IMR-90 (cell line): ENCODE measurements at regions of chr14 and their contacts with region 1.

Region 1: DNA sequence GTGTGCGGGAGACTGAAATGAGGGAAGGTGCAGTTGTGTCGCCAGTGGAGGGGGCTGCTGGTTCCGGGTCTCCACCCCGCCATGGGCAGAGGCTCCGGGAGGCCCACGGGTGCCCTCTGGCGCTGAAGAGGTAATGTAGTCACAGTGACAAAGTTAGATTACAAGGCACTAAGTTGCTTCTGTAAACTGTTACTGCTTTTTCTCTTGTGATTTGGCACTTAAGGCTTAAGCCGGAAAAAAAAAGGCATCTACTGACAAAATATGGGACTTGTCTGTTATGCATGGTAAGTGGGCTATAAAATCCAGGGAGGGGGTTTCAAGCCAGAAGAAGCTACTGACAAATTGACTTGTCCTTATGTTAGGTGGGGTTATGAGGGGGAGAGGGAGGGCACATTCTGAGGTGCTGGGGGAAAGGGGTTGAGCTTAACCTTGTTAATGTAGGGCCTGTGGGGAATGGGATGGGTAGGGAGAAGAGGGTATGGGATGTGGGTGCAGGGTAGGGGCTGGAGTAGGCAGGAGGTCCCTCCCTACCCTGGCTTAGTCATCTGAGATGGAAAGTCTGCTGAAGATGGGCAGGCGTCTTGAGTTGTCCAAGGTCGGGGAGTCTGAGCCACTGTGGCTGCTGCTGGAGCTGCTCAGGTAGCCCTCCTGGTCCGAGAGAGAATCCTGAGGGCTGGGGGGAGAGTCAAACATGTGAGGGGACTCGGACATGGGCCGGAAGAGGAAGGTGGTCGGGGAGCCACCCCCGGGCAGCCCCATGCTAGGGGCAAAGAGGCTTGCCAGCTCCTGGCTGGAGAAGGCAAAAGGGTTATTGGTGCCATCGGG is 3.7 kb downstream of the ZFP36L1 start:
- DNase-seq: peak; percentile 74
- ATAC-seq: 0 out of 2 replicates have a peak, but pooled peaks have one; percentile 6
- H3K4me3 ChIP-seq: peak overlapping the region; percentile 97
- H3K27ac ChIP-seq: peak overlapping the region; percentile 98
- H3K4me1 ChIP-seq: peaks cover 2% of the 10 kb centered on the region; the same call in 1 of the 2 replicates
- H3K27me3 ChIP-seq: no peaks in the 10 kb centered on the region
- CTCF ChIP-seq: peak; percentile 89
- POLR2A ChIP-seq: no peak
- RAD21 ChIP-seq: peak; percentile 94

Region 2: GRCh38 chr14:68248481-68249255 is 540.5 kb before region 1 on chr14:
- CTCF ChIA-PET with region 1: interaction called, 5 read pairs
- POLR2A ChIA-PET with region 1: interaction called, 10 read pairs
- dilution Hi-C with region 1: no loop called
- in situ Hi-C with region 1: no loop called
- intact Hi-C with region 1: loop called (anchors 1 kb)
- DNase-seq: peak; percentile 78
- ATAC-seq: peak; percentile 59
- H3K4me3 ChIP-seq: no peak overlapping the region
- H3K27ac ChIP-seq: peak overlapping the region; percentile 28; the same call in 1 of the 2 replicates
- H3K4me1 ChIP-seq: peaks cover 25% of the 10 kb centered on the region
- H3K27me3 ChIP-seq: no peaks in the 10 kb centered on the region
- CTCF ChIP-seq: peak; percentile 66
- POLR2A ChIP-seq: no peak
- RAD21 ChIP-seq: peak; percentile 89

Region 3: DNA sequence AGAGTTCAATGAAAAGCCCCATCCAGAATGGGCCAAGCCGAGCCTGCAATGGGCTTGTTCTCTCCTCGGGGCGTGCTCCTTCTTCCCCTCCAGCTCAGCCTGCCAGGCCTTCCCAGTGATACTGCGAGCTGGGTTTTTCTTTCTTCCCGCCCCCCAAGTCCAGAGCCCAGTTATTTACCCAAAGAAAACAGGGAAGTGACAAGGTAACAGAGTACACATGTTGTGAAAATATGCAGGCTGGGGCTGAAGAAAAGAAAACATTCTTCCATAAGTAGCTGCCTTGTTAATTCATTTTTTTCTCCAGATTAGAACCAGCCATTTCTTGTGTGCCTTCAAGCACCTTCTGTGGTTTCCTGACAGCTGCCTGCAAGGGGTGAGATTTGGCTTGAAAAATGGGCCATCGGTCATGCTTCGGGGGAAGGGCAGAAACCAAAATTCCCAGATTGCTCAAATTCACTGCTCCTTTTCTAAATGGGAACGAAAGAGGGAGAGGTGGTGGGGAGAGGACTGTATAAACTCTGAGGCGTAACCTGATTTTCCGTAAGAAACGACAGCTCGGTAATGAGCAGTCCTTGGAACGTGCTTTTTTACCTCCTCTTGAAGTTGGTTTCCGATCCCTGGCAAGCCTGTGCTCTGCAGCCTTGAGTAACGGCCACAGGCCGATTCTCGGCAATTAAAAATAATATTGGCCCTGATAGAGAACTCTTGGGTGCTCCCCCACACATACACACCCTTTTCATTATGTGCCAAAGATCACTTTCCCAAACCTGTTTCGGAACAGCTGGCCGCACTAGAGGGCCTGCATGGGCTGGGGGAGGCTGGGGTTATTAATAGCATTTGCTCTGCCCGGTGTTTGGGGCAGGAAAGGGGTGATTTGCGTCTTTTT is 225.7 kb before region 1 on chr14:
- CTCF ChIA-PET with region 1: no interaction called
- POLR2A ChIA-PET with region 1: interaction called, 12 read pairs
- dilution Hi-C with region 1: no loop called
- in situ Hi-C with region 1: no loop called
- intact Hi-C with region 1: no loop called
- DNase-seq: peak; percentile 35
- ATAC-seq: peak; percentile 59
- H3K4me3 ChIP-seq: no peak overlapping the region
- H3K27ac ChIP-seq: peak overlapping the region; percentile 34; the same call in 1 of the 2 replicates
- H3K4me1 ChIP-seq: peaks cover 11% of the 10 kb centered on the region
- H3K27me3 ChIP-seq: no peaks in the 10 kb centered on the region
- CTCF ChIP-seq: no peak
- POLR2A ChIP-seq: no peak
- RAD21 ChIP-seq: no peak

Region 4: DNA sequence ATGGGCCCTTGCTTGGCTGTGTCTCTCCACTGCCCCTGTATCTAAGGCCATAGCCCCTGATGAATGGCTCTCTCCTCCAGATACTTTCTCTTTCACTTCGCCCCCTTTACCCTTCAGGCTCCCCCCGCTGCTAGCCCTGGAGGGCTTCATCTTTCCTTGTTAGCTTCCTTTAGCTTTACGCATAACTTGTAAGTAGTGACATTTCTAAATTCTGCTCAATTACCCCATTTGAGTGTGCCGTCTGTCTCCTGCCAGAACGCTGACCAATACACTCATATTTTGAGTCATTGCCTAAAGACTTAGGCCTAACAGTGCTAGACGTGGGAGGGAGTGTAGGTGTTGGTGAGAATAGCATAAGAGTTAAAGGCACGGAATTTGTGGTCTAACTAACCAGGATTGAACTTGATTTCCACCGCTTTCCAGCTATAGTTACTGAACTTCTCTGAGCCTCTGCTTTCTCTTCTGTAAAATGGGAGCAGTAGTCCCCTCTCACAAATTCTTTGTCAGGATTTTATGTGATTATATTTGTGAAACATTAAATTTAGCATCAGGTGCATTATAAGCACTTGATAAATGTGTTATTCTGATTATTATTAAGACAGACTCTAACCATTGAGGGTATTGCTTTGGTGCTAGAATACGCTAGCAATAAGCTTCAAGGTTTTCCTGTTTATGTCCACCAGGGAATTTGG is 125.7 kb before region 1 on chr14:
- CTCF ChIA-PET with region 1: interaction called, 5 read pairs
- POLR2A ChIA-PET with region 1: interaction called, 3 read pairs
- dilution Hi-C with region 1: no loop called
- in situ Hi-C with region 1: loop called (anchors 10 kb)
- intact Hi-C with region 1: loop called (anchors 2 kb)
- DNase-seq: peak; percentile 91
- ATAC-seq: peak; percentile 38
- H3K4me3 ChIP-seq: peak overlapping the region; percentile 6; the same call in 1 of the 2 replicates
- H3K27ac ChIP-seq: peak overlapping the region; percentile 35; the same call in 1 of the 2 replicates
- H3K4me1 ChIP-seq: peaks cover 40% of the 10 kb centered on the region
- H3K27me3 ChIP-seq: no peaks in the 10 kb centered on the region
- CTCF ChIP-seq: no peak
- POLR2A ChIP-seq: no peak
- RAD21 ChIP-seq: peak; percentile 30

Region 5: GRCh38 chr14:68807148-68807600 is 18.0 kb after region 1 on chr14:
- CTCF ChIA-PET with region 1: interaction called, 4 read pairs
- POLR2A ChIA-PET with region 1: interaction called, 21 read pairs
- dilution Hi-C with region 1: no loop called
- in situ Hi-C with region 1: no loop called
- intact Hi-C with region 1: loop called (anchors 1 kb)
- DNase-seq: peak; percentile 94
- ATAC-seq: peak; percentile 88
- H3K4me3 ChIP-seq: no peak overlapping the region
- H3K27ac ChIP-seq: peak overlapping the region; percentile 94
- H3K4me1 ChIP-seq: peaks cover 23% of the 10 kb centered on the region
- H3K27me3 ChIP-seq: no peaks in the 10 kb centered on the region
- CTCF ChIP-seq: no peak
- POLR2A ChIP-seq: 0 out of 2 replicates have a peak, but pooled peaks have one; percentile 20
- RAD21 ChIP-seq: no peak

Region 6: GRCh38 chr14:68862954-68863594 is 73.9 kb after region 1 on chr14:
- CTCF ChIA-PET with region 1: no interaction called
- POLR2A ChIA-PET with region 1: no interaction called
- dilution Hi-C with region 1: no loop called
- in situ Hi-C with region 1: no loop called
- intact Hi-C with region 1: no loop called
- DNase-seq: peak; percentile 81
- ATAC-seq: peak; percentile 73
- H3K4me3 ChIP-seq: no peak overlapping the region
- H3K27ac ChIP-seq: no peak overlapping the region
- H3K4me1 ChIP-seq: no peaks in the 10 kb centered on the region
- H3K27me3 ChIP-seq: no peaks in the 10 kb centered on the region
- CTCF ChIP-seq: peak; percentile 85
- POLR2A ChIP-seq: 0 out of 2 replicates have a peak, but pooled peaks have one; percentile 41
- RAD21 ChIP-seq: peak; percentile 75